Activated B cell treated with CpG ODN at 0.5 μM for 24 hours (primary cell): ENCODE measurements at regions of chr20 and their contacts with region 1.

Region 1: DNA sequence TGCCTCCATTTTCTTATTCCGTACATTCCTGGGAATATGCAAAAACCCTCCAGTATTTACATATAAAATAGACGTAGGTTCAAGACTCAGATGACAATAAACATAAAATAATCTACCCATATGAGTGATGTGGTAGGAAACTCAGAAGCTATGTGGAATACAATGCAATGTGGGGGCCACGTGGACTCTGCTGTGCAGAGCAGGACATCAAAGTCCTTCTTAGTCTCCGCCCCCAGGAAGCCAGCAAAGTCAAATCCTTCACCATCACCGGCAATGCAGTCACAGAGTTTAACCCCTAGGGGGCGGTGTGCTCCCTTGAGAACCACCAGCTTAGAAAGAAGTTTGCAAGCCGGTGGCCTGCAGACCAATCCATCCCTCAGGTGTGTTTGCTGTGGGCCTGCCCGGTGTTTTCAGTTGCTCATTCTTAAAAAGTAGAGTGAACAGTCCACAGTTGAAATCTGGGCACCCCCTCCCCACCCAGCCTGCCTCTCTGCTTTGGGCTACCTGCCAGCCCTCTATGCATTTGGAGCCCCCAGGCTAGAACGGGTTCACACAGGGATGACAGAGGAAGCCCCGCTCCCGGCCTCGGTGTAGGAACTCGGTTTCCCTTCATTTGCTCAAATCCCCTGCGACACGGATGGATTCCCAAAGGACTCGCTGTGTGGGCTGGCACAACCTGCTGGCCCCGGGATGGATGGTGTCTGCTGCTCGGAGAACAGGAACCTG is 59.9 kb downstream of the SULF2 start:
- DNase-seq: peak; percentile 65
- ATAC-seq: peak; percentile 31
- H3K4me3 Mint-ChIP-seq: no peak overlapping the region
- H3K27ac Mint-ChIP-seq: no peak overlapping the region
- H3K4me1 Mint-ChIP-seq: peaks cover 50% of the 10 kb centered on the region
- H3K27me3 Mint-ChIP-seq: no peaks in the 10 kb centered on the region
- CTCF ChIP-seq: no peak

Region 2: GRCh38 chr20:47704755-47705493 is 20.5 kb before region 1 on chr20:
- CTCF ChIA-PET with region 1: interaction called, 3 read pairs
- POLR2A ChIA-PET with region 1: interaction called, 11 read pairs
- intact Hi-C with region 1: no loop called
- DNase-seq: no peak
- ATAC-seq: no peak
- H3K4me3 Mint-ChIP-seq: no peak overlapping the region
- H3K27ac Mint-ChIP-seq: no peak overlapping the region
- H3K4me1 Mint-ChIP-seq: peaks cover 14% of the 10 kb centered on the region
- H3K27me3 Mint-ChIP-seq: peaks cover 4% of the 10 kb centered on the region
- CTCF ChIP-seq: no peak

Region 3: DNA sequence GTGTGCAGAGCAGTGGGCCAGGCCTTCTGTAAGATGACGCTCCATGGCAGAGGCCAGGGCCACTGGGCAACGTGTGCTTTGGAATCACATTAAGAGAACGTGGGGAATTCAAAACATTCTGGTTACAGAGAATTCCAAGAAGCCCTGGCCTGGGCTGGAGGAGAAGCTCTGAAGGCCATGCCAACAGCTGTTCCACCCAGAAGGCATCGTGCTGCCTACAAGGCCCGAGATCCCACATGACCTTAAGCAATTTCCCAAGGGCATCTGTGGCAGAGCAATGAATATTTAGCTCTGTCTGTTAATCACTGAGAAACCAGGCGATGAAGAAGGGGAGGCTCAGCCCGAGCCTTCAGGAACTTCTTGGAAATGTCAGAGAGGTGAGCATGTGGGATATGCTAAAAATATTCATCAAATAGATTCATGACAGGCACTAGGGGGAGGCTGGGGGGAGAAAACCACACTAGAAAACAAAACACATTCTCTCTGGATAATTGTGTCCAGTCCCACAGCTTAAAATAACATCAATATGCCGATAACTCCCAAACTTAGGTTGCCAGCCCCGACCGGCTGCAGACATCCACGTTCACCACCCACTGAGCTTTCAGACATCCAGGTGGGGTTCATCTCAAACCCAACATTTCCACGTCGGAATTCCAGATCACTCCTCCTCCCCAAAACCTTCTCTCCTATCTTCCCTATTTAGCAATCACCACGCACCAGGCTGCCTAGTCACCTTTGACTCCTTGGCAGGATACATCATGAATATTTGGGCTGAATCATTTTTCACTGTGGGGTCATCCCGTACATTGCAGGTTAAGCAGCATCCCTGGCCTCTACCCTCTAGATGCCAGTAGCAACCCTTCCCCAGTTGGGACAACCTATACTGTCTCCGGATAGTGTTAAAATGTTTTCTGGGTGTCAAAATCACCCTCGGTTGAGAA is 53.3 kb after region 1 on chr20:
- CTCF ChIA-PET with region 1: no interaction called
- POLR2A ChIA-PET with region 1: no interaction called
- intact Hi-C with region 1: no loop called
- DNase-seq: no peak
- ATAC-seq: no peak
- H3K4me3 Mint-ChIP-seq: no peak overlapping the region
- H3K27ac Mint-ChIP-seq: no peak overlapping the region
- H3K4me1 Mint-ChIP-seq: no peaks in the 10 kb centered on the region
- H3K27me3 Mint-ChIP-seq: peaks cover 13% of the 10 kb centered on the region
- CTCF ChIP-seq: no peak

Region 4: DNA sequence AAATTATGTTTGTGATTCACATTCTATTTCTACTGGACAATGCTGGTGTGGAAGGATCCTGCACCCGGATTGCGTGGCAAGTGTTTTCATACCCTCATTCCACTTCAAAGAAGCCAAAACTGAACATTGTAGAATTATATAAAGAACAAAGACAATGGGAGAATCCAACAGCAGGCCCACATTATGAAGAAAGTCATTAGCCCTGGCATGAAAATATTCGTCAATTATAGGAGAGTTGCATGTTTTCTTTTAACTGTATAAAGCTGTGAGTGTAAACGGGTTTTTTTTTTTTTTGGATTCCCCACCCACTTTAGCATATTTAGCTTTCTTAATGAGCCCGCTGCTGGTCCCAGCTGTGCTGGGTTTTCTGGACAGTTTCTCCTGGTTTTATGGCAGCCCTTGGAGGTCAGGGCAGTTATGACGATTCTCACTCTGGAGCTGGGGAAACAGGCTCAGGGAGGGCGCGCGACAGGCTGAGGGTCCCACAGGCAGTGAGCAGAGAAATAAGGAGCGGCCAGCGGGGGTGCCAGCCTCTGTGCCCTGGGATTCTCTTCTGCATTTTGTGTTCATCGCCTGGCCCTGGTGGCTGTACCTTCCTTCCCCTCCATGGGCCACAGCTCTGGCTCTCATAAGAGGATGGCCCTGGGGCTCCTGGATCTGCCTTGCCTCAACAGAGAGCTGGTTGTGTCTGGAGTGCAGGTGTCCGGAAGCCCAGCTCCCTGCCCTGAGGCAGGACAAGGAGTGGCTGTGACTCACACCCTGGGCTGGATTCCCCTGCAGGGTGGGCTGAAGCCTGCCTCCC is 83.9 kb after region 1 on chr20:
- CTCF ChIA-PET with region 1: no interaction called
- POLR2A ChIA-PET with region 1: no interaction called
- intact Hi-C with region 1: no loop called
- DNase-seq: no peak
- ATAC-seq: no peak
- H3K4me3 Mint-ChIP-seq: no peak overlapping the region
- H3K27ac Mint-ChIP-seq: no peak overlapping the region
- H3K4me1 Mint-ChIP-seq: no peaks in the 10 kb centered on the region
- H3K27me3 Mint-ChIP-seq: peaks cover 38% of the 10 kb centered on the region
- CTCF ChIP-seq: no peak

Region 5: DNA sequence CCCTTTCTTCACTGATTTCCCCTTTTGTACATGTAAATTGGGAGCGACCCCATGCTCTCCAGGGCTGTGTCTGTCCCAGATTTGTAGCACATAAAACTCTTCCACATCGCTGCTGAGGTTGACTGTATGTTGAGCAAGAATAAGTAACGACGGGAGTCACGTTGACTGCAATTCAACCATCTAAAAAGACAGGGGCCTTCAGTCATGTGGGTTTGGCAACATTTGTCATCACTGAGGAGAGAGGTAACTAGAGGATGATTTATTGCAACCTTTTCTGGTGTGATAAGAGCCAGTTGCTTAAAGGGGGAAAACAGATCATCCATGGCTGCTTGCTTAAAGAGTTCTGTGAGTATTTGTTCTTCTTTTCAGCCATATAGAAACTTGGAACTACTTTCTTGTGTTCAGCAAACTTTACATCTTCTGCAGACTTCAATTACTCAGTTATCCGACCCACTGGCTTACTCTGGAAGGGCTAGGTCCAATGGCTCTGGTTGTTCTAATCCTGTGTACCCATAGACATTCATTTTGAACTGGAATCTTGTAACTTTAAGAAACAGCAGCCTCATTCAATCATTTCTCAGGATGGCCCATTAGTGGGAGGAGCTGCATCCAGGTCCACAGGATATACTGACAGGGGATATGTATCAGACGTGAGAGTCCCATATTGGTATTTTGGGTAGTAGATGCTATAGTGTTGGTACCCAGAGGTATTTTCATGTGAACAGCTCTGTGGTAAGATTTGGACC is 219.5 kb after region 1 on chr20:
- CTCF ChIA-PET with region 1: no interaction called
- POLR2A ChIA-PET with region 1: no interaction called
- intact Hi-C with region 1: no loop called
- DNase-seq: no peak
- ATAC-seq: no peak
- H3K4me3 Mint-ChIP-seq: no peak overlapping the region
- H3K27ac Mint-ChIP-seq: no peak overlapping the region
- H3K4me1 Mint-ChIP-seq: peaks cover 2% of the 10 kb centered on the region
- H3K27me3 Mint-ChIP-seq: peaks cover 2% of the 10 kb centered on the region
- CTCF ChIP-seq: no peak

Region 6: DNA sequence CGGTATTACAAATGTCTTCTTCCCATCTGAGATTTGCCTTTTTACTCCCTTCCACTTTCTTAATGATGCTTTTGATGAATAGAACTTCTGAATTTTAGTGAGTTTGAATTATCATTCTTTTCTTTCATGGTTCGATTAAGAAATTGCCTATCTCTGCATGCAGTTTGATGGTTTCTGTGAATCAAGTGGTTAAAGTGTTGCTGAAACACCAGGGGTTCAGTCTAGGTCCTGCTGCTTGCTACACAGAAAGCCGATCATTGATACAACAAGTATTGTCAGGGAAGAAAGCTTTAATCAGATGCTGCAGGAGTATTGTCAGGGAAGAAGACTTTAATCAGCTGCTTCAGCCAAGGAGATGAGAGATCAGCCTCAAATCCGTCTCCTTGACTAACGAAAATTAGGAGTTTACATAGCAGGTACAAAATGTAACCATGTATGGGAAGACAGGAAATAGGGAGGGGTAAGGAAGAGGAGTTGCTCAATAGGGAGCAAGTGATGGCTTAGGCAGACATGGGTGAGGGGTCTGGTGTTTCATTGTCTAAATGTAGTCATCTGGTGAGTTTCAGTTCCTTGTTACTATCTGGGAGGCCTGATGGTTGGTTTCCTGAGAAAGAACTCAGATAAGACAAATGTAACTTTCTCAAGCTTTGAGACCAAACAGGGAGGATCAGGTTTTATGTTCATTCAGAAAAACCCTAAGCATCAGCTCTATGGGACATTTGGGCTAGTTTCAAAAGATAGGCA is 277.0 kb after region 1 on chr20:
- CTCF ChIA-PET with region 1: no interaction called
- POLR2A ChIA-PET with region 1: no interaction called
- intact Hi-C with region 1: loop called (anchors 1 kb)
- DNase-seq: no peak
- ATAC-seq: peak; percentile 77
- H3K4me3 Mint-ChIP-seq: peak overlapping the region; percentile 2
- H3K27ac Mint-ChIP-seq: peak overlapping the region; percentile 28
- H3K4me1 Mint-ChIP-seq: peaks cover 62% of the 10 kb centered on the region
- H3K27me3 Mint-ChIP-seq: no peaks in the 10 kb centered on the region
- CTCF ChIP-seq: no peak

Region 7: GRCh38 chr20:48359697-48360336 is 634.4 kb after region 1 on chr20:
- CTCF ChIA-PET with region 1: no interaction called
- POLR2A ChIA-PET with region 1: no interaction called
- intact Hi-C with region 1: loop called (anchors 2 kb)
- DNase-seq: peak; percentile 73
- ATAC-seq: peak; percentile 81
- H3K4me3 Mint-ChIP-seq: peak overlapping the region; percentile 88
- H3K27ac Mint-ChIP-seq: peak overlapping the region; percentile 97
- H3K4me1 Mint-ChIP-seq: peaks cover 59% of the 10 kb centered on the region
- H3K27me3 Mint-ChIP-seq: no peaks in the 10 kb centered on the region
- CTCF ChIP-seq: no peak

Region 8: DNA sequence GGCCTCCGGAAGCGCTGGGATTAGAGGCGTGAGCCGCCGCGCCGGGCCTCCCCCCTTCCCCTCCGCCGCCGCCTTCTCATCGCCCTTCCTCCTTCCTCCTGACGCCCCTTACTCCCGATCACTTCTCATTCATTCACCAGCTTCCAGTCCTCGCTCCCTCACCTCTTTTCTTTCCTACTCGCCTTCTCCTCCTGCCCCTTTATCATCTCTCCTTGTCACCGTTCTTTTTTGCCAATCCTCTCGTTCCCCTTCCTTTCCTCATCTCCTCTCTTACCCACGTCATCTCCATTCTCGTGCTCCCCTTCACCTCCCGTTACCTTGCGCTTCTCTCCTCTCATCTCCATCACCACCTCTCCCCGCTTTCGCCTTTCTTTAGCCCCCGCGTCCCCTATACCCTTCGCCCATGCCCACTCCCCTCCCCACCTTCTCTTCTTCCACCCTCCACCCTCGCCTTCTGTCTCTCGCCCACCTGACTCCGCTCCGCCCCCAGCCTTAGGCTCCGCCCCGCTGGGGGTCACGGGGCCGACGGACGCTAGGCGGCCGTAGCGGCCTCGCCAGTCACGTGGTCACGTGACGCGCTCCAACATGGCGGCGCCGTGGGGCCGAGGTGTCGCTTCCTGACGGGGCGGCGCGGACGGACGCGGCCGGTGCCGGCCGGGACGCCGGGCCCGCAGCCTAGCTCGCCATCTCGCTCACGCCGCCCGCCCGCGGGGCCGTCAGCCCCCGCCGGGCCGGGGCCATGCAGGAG is 1195.9 kb after region 1 on chr20 and contains the start of gene ARFGEF2:
- CTCF ChIA-PET with region 1: no interaction called
- POLR2A ChIA-PET with region 1: interaction called, 3 read pairs
- intact Hi-C with region 1: loop called (anchors 5 kb)
- DNase-seq: peak; percentile 96
- ATAC-seq: peak; percentile 90
- H3K4me3 Mint-ChIP-seq: peak within 1 kb of the TSS; percentile 93
- H3K27ac Mint-ChIP-seq: peak within 1 kb of the TSS; percentile 95
- H3K4me1 Mint-ChIP-seq: peaks cover 58% of the 10 kb centered on the region
- H3K27me3 Mint-ChIP-seq: no peaks in the 10 kb centered on the region
- CTCF ChIP-seq: no peak
- total RNA-seq, gene ARFGEF2: 30.8 and 39.0 TPM in 2 replicates